ENCODE measurements at regions of chr11 and their contacts with region 1.

Region 1: DNA sequence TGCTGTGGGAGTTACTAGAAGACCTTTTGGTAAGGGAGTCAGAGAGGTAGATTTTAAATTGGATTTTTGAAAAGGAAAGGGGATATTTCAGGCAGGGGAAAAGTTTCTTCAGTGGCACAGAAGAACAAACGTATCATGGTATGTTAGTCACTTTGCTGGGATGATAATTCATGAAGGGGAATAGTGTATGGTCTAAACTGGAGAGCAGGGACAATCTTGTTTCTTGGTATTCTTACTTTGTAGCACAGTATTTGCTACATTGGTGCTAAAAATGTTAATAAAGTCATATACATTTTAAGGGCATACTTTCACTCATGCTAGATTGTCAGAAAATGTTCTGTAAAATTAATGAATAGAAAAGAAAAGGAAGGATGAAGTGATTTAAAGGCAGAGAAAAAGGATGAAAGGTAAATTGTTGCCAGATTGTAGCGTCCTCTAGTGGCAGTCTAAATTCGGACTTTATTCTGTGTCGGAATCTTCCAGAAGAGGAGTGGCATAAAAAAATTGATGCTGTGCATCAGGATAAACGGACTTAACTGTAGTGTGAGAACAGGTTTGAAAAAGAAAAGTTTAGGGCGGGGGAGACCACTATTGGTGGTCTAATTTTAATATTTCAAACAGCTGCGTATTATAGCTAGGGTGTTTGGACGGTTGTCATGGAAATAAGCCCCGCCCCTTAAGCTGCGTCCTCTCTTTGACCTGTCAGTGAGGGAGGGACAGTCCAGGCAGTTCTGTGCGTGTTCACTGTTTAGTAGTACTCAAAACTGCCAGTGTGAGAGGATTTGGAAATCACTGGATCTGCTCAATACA is at the start of gene BCO2:
- DNase-seq: peak; percentile 52
- ATAC-seq: peak; percentile 95
- H3K4me3 ChIP-seq: peak within 1 kb of the TSS; percentile 29 to 49
- H3K27ac ChIP-seq: no peak within 1 kb of the TSS; the same call in 1 of the 2 replicates
- H3K4me1 ChIP-seq: peaks cover 7 to 33% of the 10 kb centered on the region in 2 experiments; a peak in 3 of 4 replicates
- H3K27me3 ChIP-seq: no peaks in the 10 kb centered on the region
- CTCF ChIP-seq: peak; percentile 83 to 99 (median 91)
- POLR2A ChIP-seq: no peak
- RAD21 ChIP-seq: peak; percentile 95
- total RNA-seq, gene BCO2: 4.0 TPM

Region 2: GRCh38 chr11:111933872-111934271 is 241.1 kb before region 1 on chr11:
- CTCF ChIA-PET with region 1: no interaction called
- POLR2A ChIA-PET with region 1: no interaction called
- RAD21 ChIA-PET with region 1: no interaction called
- intact Hi-C with region 1: loop called (anchors 5 kb)
- DNase-seq: no peak
- ATAC-seq: no peak
- H3K4me3 ChIP-seq: no peak overlapping the region
- H3K27ac ChIP-seq: no peak overlapping the region
- H3K4me1 ChIP-seq: peaks cover 18 to 31% of the 10 kb centered on the region in 2 experiments; a peak in 3 of 4 replicates
- H3K27me3 ChIP-seq: no peaks in the 10 kb centered on the region
- CTCF ChIP-seq: no peak
- POLR2A ChIP-seq: no peak
- RAD21 ChIP-seq: no peak

Region 3: DNA sequence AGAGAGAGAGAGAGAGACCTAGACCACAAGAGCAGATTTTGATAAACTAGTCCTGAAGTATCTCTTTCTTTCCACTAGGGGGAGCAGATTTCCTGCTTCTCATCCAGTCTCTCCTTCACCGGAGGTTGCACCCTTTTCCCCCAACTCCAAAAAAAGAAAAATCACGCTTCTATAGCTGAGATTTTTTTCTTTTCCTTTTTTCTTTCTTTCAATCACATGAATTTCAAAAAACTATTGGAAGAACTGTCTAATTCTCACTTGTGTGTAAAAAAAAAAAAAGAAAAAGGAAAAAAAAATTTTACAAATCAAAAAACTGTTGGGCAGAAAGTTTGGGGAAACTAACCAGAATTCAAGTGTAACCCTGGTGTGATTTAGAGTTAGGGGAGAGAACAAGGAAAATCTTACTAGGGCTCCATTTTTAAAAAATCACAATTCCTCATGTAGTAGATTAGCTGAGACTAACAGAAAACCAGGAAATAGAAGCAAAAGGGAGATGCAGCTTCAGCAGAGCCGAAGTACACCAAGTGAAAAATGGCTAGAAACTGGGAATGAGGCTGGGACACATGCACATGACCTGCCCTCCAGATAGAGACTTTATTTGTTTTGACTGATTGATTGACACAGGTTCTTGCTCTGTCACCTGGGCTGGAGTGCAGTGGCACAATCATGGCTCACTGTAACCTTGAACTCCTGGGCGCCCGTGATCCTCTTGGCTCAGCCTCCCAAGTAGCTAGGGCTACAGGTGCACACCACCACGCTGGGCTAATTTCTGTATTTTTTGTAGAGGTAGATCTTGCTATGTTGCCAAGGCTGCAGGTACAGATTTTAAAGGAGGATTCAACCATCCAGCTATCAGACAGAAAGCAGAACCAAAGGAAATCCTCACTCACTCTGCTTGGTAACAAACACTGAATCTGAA is 61.2 kb before region 1 on chr11:
- CTCF ChIA-PET with region 1: interaction called, 16 read pairs
- POLR2A ChIA-PET with region 1: no interaction called
- RAD21 ChIA-PET with region 1: interaction called, 3 to 11 read pairs
- intact Hi-C with region 1: loop called (anchors 1 kb)
- DNase-seq: peak; percentile 49
- ATAC-seq: peak; percentile 81
- H3K4me3 ChIP-seq: no peak overlapping the region
- H3K27ac ChIP-seq: no peak overlapping the region; the same call in 1 of the 2 replicates
- H3K4me1 ChIP-seq: peaks cover 21 to 33% of the 10 kb centered on the region in 2 experiments
- H3K27me3 ChIP-seq: no peaks in the 10 kb centered on the region
- CTCF ChIP-seq: peak; percentile 49 to 63 (median 63); a peak in 5 of 6 replicates
- POLR2A ChIP-seq: no peak
- RAD21 ChIP-seq: peak; percentile 84

Region 4: DNA sequence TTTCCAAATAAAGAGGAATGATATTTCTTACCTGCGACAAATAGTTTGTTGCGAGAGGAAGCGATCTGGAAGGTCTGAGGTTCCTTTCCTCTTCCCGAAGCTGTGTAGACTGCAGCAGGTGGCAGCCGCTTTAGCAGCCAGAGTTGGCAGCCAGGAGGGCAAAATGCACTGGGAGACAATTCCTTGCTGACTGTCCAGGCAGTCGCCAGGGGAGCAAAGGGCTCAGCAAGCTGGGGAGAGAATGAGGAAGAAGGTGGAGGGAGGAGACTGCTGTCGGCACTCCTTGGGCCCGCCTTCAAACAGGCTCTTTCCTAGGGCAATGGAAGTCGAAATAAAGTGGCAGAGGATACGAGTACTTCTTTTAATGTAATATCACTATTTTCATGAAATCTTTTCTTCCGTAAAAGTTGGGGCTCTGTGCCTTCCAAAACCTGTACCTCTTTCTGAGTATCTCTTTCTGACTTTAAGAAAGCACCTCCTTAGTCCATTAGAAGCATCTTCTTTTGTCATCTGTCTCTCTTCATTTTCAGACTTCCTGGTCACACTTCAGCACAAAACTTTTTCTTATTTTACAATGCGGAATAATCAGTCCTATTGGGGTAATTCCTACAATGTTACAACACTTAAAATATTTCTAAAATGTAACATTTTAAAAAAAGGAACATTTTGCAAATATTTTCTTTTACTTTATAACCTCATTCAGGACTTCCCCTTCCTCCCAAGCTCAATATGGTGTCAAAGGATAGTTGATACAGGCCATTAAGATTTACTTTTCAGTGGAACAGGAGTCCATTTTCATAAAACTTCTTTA is 10.9 kb before region 1 on chr11 and contains the start of gene IL18:
- CTCF ChIA-PET with region 1: interaction called, 11 read pairs
- POLR2A ChIA-PET with region 1: interaction called, 13 read pairs
- RAD21 ChIA-PET with region 1: no interaction called
- intact Hi-C with region 1: no loop called
- DNase-seq: peak; percentile 78
- ATAC-seq: peak; percentile 97
- H3K4me3 ChIP-seq: peak within 1 kb of the TSS; percentile 68 to 79
- H3K27ac ChIP-seq: peak within 1 kb of the TSS; percentile 57
- H3K4me1 ChIP-seq: peaks cover 22 to 61% of the 10 kb centered on the region in 2 experiments
- H3K27me3 ChIP-seq: no peaks in the 10 kb centered on the region
- CTCF ChIP-seq: 0 out of 6 replicates have a peak, but pooled peaks of 1 of the 3 experiments have one; percentile 6
- POLR2A ChIP-seq: no peak
- RAD21 ChIP-seq: peak; percentile 1; the same call in 1 of the 2 replicates
- total RNA-seq, gene IL18: 112 TPM

Measured in HCT116 (cell line).